MCF 10A (cell line): ENCODE measurements at regions of chr5 and their contacts with region 1.

Region 1: GRCh38 chr5:121962347-121962670 is 534 bp downstream of the SRFBP1 start:
- DNase-seq: no peak
- H3K4me3 Mint-ChIP-seq: peak overlapping the region; percentile 78
- H3K27ac Mint-ChIP-seq: peak overlapping the region; percentile 96
- H3K4me1 Mint-ChIP-seq: peaks cover 13% of the 10 kb centered on the region
- H3K27me3 Mint-ChIP-seq: no peaks in the 10 kb centered on the region
- CTCF ChIP-seq: no peak

Region 2: DNA sequence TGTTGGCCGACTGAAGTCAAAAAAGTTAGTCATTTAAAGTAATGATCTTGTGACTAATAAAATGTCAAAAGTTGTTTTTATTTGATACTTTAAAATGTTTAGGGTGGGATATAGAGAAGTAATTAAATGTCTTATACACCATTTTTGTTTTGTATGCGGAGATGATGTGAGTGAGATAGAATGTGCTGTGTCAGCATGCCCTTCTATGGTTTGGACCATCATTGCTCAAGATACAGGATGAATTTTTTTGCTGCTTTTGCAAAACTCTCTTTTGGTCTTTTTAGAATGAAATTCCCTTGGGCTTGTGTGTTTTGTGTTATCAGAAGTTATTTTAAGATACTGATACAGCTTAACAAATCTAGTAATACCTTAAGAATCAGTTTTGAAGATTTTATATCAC is 12.0 kb after region 1 on chr5:
- CTCF ChIA-PET with region 1: interaction called, 5 read pairs
- POLR2A ChIA-PET with region 1: interaction called, 11 read pairs
- intact Hi-C with region 1: no loop called
- DNase-seq: peak; percentile 39
- H3K4me3 Mint-ChIP-seq: no peak overlapping the region
- H3K27ac Mint-ChIP-seq: no peak overlapping the region
- H3K4me1 Mint-ChIP-seq: peaks cover 12% of the 10 kb centered on the region
- H3K27me3 Mint-ChIP-seq: no peaks in the 10 kb centered on the region
- CTCF ChIP-seq: no peak

Region 3: DNA sequence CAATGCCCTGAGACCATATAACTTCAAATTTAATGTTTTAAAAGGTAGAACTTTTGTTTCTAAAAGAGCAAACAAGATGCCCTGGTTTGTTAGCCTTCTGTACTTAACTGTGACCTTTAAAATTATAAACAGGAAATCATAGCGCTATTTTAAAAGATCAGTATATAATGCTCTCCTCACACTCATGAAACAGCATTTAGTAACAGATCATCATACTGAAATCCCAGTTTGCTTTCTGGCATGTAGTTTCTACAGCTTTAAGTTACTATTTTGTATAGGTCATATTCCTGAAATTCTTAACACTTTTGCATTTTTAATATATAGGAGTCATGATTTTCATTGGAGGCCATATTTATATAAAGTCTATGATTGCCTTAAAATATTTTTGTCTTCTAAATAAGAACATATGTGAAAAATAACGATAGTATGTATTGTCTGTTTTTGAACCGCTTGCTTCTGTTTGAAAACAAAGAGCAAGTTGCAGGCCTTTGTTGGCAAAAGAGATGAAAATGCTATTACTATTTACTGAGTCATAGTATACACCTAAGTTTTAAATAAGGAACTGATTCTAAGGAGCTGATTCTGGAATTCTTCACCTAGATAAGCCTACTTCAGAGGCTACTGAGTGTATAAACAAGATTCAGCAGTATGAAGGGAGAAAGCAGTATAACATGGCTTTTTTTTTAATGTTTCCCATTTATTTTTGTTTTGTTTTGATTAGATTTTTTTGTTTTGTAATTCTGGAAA is 20.0 kb after region 1 on chr5:
- CTCF ChIA-PET with region 1: interaction called, 4 read pairs
- POLR2A ChIA-PET with region 1: interaction called, 10 read pairs
- intact Hi-C with region 1: no loop called
- DNase-seq: peak; percentile 34
- H3K4me3 Mint-ChIP-seq: no peak overlapping the region
- H3K27ac Mint-ChIP-seq: peak overlapping the region; percentile 70
- H3K4me1 Mint-ChIP-seq: peaks cover 23% of the 10 kb centered on the region
- H3K27me3 Mint-ChIP-seq: no peaks in the 10 kb centered on the region
- CTCF ChIP-seq: no peak

Region 4: GRCh38 chr5:122120957-122121356 is 158.6 kb after region 1 on chr5:
- CTCF ChIA-PET with region 1: interaction called, 4 read pairs
- POLR2A ChIA-PET with region 1: interaction called, 18 read pairs
- intact Hi-C with region 1: no loop called
- DNase-seq: peak; percentile 71
- H3K4me3 Mint-ChIP-seq: peak overlapping the region; percentile 45
- H3K27ac Mint-ChIP-seq: peak overlapping the region; percentile 90
- H3K4me1 Mint-ChIP-seq: peaks cover 30% of the 10 kb centered on the region
- H3K27me3 Mint-ChIP-seq: no peaks in the 10 kb centered on the region
- CTCF ChIP-seq: no peak